Psoas muscle (tissue), 8 donors: ENCODE measurements at regions of chr1 and their contacts with region 1.

Region 1: GRCh38 chr1:95257758-95258157 is 23.7 kb downstream of the RWDD3 start:
- DNase-seq: no peak
- ATAC-seq: no peak
- H3K4me3 ChIP-seq: no peak overlapping the region
- H3K27ac ChIP-seq: no peak overlapping the region
- H3K4me1 ChIP-seq: no peaks in the 10 kb centered on the region
- H3K27me3 ChIP-seq: no peaks in the 10 kb centered on the region
- CTCF ChIP-seq: no peak

Region 2: GRCh38 chr1:95195046-95195445 is 62.7 kb before region 1 on chr1:
- intact Hi-C with region 1: no loop called
- DNase-seq: no peak
- ATAC-seq: no peak
- H3K4me3 ChIP-seq: no peak overlapping the region
- H3K27ac ChIP-seq: no peak overlapping the region
- H3K4me1 ChIP-seq: peaks cover 41% of the 10 kb centered on the region
- H3K27me3 ChIP-seq: no peaks in the 10 kb centered on the region
- CTCF ChIP-seq: no peak

Region 3: DNA sequence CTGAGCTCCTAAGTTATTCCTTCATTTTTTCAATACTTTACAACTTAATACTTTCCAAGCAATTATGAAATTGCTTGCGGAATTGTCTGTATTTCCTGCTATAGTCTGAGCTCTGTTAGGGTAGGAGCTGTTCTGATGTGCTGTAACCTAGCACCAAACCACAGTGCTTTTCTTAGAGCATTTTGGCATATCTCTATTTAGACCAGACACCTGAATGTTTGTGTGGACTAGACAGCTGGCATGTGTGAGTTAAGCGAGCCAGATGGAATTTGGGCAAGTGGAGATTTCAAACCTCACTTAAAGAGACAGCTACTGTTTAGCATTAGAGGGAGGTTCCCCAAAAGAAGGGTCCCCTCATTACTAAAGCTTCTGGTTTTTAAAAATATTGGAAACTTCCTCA is 82.3 kb after region 1 on chr1:
- intact Hi-C with region 1: loop called in 1 of 2 experiments (anchors 10 kb)
- DNase-seq: no peak
- ATAC-seq: peak; percentile 64 to 92 (median 75)
- H3K4me3 ChIP-seq: peak overlapping the region; percentile 23
- H3K27ac ChIP-seq: no peak overlapping the region
- H3K4me1 ChIP-seq: peaks cover 10% of the 10 kb centered on the region
- H3K27me3 ChIP-seq: no peaks in the 10 kb centered on the region
- CTCF ChIP-seq: no peak